CD8-positive, alpha-beta T cell (primary cell): ENCODE measurements at regions of chr16 and their contacts with region 1.

Region 1: DNA sequence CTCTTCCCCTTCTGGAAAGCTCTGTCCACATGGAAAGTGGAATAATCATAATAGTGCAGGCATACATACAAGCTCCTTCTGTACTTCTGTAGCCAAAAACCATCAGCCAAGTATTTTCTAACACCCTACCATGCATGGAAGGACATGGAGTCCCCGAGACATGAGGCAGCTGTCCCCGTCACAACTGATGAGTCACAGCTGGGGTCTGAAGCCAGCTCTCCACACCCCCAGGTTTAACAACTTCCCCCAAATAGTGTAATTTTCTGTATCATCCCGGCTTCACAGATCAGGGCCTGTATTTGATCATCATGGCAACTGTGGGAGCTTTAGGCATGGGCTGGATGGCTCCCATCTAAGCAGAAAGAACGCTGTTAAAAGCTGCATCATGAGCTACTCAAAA is 16.6 kb downstream of the C16orf96 start:
- DNase-seq: no peak
- ATAC-seq: no peak
- H3K4me3 ChIP-seq: no peak overlapping the region
- H3K4me3 Mint-ChIP-seq: no peak overlapping the region
- H3K27ac ChIP-seq: no peak overlapping the region
- H3K27ac Mint-ChIP-seq: no peak overlapping the region
- H3K4me1 ChIP-seq: peaks cover 9% of the 10 kb centered on the region
- H3K4me1 Mint-ChIP-seq: peaks cover 2% of the 10 kb centered on the region
- H3K27me3 ChIP-seq: no peaks in the 10 kb centered on the region
- H3K27me3 Mint-ChIP-seq: no peaks in the 10 kb centered on the region
- CTCF ChIP-seq: no peak

Region 2: GRCh38 chr16:4586291-4586690 is 13.6 kb after region 1 on chr16:
- CTCF ChIA-PET with region 1: interaction called, 17 read pairs
- POLR2A ChIA-PET with region 1: no interaction called
- intact Hi-C with region 1: no loop called
- DNase-seq: no peak
- ATAC-seq: no peak
- H3K4me3 ChIP-seq: no peak overlapping the region
- H3K4me3 Mint-ChIP-seq: no peak overlapping the region
- H3K27ac ChIP-seq: no peak overlapping the region
- H3K27ac Mint-ChIP-seq: no peak overlapping the region
- H3K4me1 ChIP-seq: peaks cover 3% of the 10 kb centered on the region
- H3K4me1 Mint-ChIP-seq: no peaks in the 10 kb centered on the region
- H3K27me3 ChIP-seq: no peaks in the 10 kb centered on the region
- H3K27me3 Mint-ChIP-seq: peaks cover 9% of the 10 kb centered on the region
- CTCF ChIP-seq: no peak